ENCODE measurements at regions of chr3 and their contacts with region 1.

Region 1: GRCh38 chr3:173938159-173938558 is 540.6 kb downstream of the NLGN1 start:
- DNase-seq: no peak
- H3K4me3 Mint-ChIP-seq: no peak overlapping the region
- H3K27ac Mint-ChIP-seq: no peak overlapping the region
- H3K4me1 Mint-ChIP-seq: peaks cover 11% of the 10 kb centered on the region
- H3K27me3 Mint-ChIP-seq: no peaks in the 10 kb centered on the region
- CTCF ChIP-seq: no peak

Region 2: GRCh38 chr3:173711593-173711992 is 226.6 kb before region 1 on chr3:
- CTCF ChIA-PET with region 1: no interaction called
- intact Hi-C with region 1: no loop called
- DNase-seq: peak; percentile 71
- H3K4me3 Mint-ChIP-seq: peak overlapping the region; percentile 62
- H3K27ac Mint-ChIP-seq: peak overlapping the region; percentile 94
- H3K4me1 Mint-ChIP-seq: peaks cover 31% of the 10 kb centered on the region
- H3K27me3 Mint-ChIP-seq: no peaks in the 10 kb centered on the region
- CTCF ChIP-seq: no peak

Region 3: DNA sequence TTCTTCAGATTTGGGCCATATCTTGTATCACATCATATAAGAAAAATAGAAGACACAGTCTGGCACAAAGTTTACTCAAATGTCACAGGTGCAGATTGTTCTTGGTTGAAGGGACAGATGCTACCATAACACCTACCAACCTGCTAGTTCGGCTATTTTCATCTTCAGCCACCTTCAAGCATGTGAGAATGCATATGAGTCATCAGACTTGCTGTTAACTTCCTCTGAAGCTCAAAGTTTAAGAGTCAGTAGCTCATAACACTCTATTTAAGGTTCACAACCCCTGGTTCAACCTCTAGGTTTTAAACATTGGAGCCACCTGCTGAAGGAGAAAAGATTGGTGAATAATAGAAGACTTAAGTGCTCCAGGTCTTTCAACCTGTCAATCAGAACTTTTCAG is 17.8 kb before region 1 on chr3:
- CTCF ChIA-PET with region 1: no interaction called
- intact Hi-C with region 1: loop called (anchors 2 kb)
- DNase-seq: no peak
- H3K4me3 Mint-ChIP-seq: no peak overlapping the region
- H3K27ac Mint-ChIP-seq: peak overlapping the region; percentile 28
- H3K4me1 Mint-ChIP-seq: peaks cover 9% of the 10 kb centered on the region
- H3K27me3 Mint-ChIP-seq: no peaks in the 10 kb centered on the region
- CTCF ChIP-seq: no peak

Region 4: GRCh38 chr3:174010902-174011301 is 72.7 kb after region 1 on chr3:
- CTCF ChIA-PET with region 1: no interaction called
- intact Hi-C with region 1: no loop called
- DNase-seq: no peak
- H3K4me3 Mint-ChIP-seq: no peak overlapping the region
- H3K27ac Mint-ChIP-seq: no peak overlapping the region
- H3K4me1 Mint-ChIP-seq: no peaks in the 10 kb centered on the region
- H3K27me3 Mint-ChIP-seq: no peaks in the 10 kb centered on the region
- CTCF ChIP-seq: no peak

Measured in Calu3 (cell line).